CD4-positive, alpha-beta memory T cell (primary cell): ENCODE measurements at regions of chr17 and their contacts with region 1.

Region 1: DNA sequence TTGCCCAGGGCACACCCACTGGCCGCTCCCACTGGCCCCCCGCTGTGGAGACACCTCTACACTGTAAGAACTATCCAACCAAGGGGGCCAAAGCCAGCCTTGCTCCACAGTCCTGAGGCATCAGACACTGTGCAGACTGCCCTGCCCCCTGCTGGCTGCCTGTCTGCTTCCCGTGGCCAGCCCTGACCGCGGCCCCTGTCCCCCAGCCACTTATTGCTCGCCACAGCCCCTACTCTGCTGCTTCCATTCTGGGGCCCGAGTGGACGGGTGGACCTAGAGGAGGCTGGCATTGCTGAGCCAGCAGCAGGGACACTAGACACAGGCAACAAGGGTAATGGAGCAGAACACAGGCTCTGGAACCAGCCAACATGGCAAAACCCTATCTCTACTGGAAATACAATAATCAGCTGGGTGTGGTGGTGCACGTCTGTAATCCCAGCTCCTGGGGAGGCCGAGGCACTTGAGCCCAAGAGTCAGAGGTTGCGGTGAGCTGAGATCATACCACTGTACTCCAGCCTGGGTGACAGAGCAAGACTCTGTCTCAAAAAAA is 19.7 kb upstream of the LRRC37A3 start:
- DNase-seq: peak in 1 of 5 donors; percentile 9
- H3K4me3 ChIP-seq: no peak overlapping the region
- H3K4me3 Mint-ChIP-seq: peak overlapping the region in 1 of 8 donors; percentile 57
- H3K27ac ChIP-seq: no peak overlapping the region
- H3K27ac Mint-ChIP-seq: no peak overlapping the region
- H3K4me1 ChIP-seq: no peaks in the 10 kb centered on the region
- H3K4me1 Mint-ChIP-seq: peaks cover 0 to 7% (median 2%) of the 10 kb centered on the region in 4 donors
- H3K27me3 ChIP-seq: no peaks in the 10 kb centered on the region
- H3K27me3 Mint-ChIP-seq: no peaks in the 10 kb centered on the region

Region 2: GRCh38 chr17:64773836-64774761 is 164.9 kb before region 1 on chr17:
- CTCF ChIA-PET with region 1: interaction called, 4 read pairs
- POLR2A ChIA-PET with region 1: no interaction called
- intact Hi-C with region 1: loop called (anchors 10 kb)
- DNase-seq: no peak
- H3K4me3 ChIP-seq: no peak overlapping the region
- H3K4me3 Mint-ChIP-seq: no peak overlapping the region
- H3K27ac ChIP-seq: no peak overlapping the region
- H3K27ac Mint-ChIP-seq: no peak overlapping the region
- H3K4me1 ChIP-seq: peaks cover 10% of the 10 kb centered on the region
- H3K4me1 Mint-ChIP-seq: peaks cover 6 to 32% (median 15%) of the 10 kb centered on the region in 4 donors
- H3K27me3 ChIP-seq: no peaks in the 10 kb centered on the region
- H3K27me3 Mint-ChIP-seq: no peaks in the 10 kb centered on the region